ENCODE measurements at regions of chr21 and their contacts with region 1.

Region 1: DNA sequence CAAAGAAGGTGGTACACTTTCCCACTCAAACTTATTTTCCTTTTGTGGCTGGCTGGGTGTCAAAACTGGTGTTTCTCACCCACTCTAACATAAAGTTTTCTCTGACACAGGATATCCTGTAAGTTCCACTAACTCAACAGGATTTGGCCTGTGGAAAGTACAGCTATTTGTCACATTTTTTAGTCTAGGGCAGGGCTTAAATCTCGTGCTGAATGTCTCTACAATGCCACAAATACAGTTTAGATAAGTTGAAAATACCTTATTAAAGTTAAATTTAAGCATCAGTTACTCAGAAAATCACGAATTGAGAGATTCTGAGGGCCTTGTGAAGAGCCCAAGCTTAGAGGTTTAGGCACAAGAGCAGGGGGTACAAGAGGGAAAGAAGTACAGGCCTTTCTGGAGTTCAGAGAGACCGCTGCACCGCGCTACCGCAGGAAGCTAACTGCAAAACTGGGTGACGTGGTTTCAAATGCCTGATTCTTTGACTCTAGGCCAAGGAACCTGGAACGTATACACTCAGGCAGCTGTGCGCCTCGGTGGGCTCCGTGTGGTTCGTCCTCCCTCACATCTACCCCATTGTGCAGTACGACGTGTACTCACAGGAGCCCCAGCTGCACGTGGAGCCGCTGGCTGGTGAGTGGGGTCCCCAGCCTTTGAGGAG is 23.4 kb upstream of the PWP2 start:
- DNase-seq: no peak
- ATAC-seq: no peak
- H3K4me3 ChIP-seq: no peak overlapping the region
- H3K27ac ChIP-seq: no peak overlapping the region
- H3K4me1 ChIP-seq: peaks cover 4 to 6% of the 10 kb centered on the region in 2 experiments; a peak in 2 of 5 replicates
- H3K27me3 ChIP-seq: no peaks in the 10 kb centered on the region
- CTCF ChIP-seq: no peak
- EP300 ChIP-seq: no peak
- POLR2A ChIP-seq: no peak
- RAD21 ChIP-seq: no peak

Region 2: GRCh38 chr21:44071359-44072104 is 12.2 kb before region 1 on chr21:
- CTCF ChIA-PET with region 1: no interaction called
- POLR2A ChIA-PET with region 1: interaction called, 14 read pairs
- in situ Hi-C with region 1: no loop called
- intact Hi-C with region 1: no loop called
- DNase-seq: no peak
- ATAC-seq: peak; percentile 66
- H3K4me3 ChIP-seq: no peak overlapping the region
- H3K27ac ChIP-seq: no peak overlapping the region
- H3K4me1 ChIP-seq: peaks cover 0 to 6% of the 10 kb centered on the region in 2 experiments; a peak in 1 of 5 replicates
- H3K27me3 ChIP-seq: no peaks in the 10 kb centered on the region
- CTCF ChIP-seq: peak in 1 of 3 experiments; percentile 37; a peak in 3 of 6 replicates
- EP300 ChIP-seq: no peak
- POLR2A ChIP-seq: no peak
- RAD21 ChIP-seq: no peak

Region 3: GRCh38 chr21:44939532-44940115 is 855.9 kb after region 1 on chr21 and contains the start of gene SLX9:
- CTCF ChIA-PET with region 1: no interaction called
- POLR2A ChIA-PET with region 1: no interaction called
- in situ Hi-C with region 1: no loop called
- intact Hi-C with region 1: no loop called
- DNase-seq: peak; percentile 93 to 97 (median 96)
- ATAC-seq: peak; percentile 96
- H3K4me3 ChIP-seq: peak within 1 kb of the TSS; percentile 84
- H3K27ac ChIP-seq: peak within 1 kb of the TSS; percentile 83
- H3K4me1 ChIP-seq: peaks cover 16 to 33% of the 10 kb centered on the region in 2 experiments; a peak in 4 of 5 replicates
- H3K27me3 ChIP-seq: no peaks in the 10 kb centered on the region
- CTCF ChIP-seq: peak in 2 of 3 experiments; percentile 11 to 15; a peak in 1 of 6 replicates
- EP300 ChIP-seq: 0 out of 2 replicates have a peak, but pooled peaks have one; percentile 31
- POLR2A ChIP-seq: peak; percentile 96
- RAD21 ChIP-seq: no peak; a peak in 1 of 4 replicates
- polyA plus RNA-seq, gene SLX9: 1.2 to 1.8 TPM

Measured in K562 (cell line).